A549 (cell line): ENCODE measurements at regions of chr11 and their contacts with region 1.

Region 1: DNA sequence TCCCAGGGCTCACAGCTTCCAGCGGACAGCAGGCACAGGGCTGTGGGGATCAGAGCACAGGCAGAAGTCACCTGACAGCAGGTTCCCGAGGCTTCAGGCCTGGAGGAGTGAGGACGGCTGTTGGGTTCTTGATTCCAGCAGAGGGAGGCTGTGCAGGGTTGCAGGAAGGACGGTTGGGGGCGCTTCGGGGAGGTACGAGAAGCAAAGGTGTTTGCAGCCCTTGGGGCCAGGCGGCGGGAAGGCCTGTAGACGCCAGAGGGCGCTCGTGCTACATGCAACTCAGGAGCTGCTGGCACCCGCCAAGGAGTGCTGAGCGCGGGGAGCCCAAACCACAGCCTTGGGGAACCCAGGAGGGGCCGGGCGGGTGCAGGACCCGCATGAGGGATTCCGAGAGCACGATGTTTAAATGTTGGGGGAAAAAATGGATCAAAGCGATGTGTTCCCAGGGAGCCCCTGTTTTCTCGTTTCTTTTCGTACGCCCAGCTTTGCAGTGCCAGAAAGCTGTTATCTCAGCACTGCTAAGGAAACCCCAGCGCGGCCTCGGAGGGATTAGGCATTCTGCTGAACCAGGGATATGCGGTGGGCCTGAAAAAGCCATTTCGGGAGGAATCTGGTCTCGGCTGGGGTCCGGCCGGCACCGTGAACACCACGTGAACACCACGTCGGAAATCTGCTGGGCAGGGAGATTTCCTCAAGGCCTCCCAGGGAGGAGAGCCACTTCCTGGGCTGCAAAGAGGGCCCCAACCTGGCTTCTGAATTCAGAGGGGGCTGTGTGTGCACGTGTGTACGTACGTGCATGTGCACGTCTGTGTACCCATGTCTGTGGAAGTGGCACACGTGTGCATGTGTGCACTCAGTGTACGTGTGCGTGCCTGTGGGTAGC is 88.1 kb downstream of the KCNQ1 start:
- DNase-seq: peak; percentile 83 to 95
- ATAC-seq: peak; percentile 77 to 92
- H3K4me3 ChIP-seq: no peak overlapping the region
- H3K27ac ChIP-seq: no peak overlapping the region
- H3K4me1 ChIP-seq: no peaks in the 10 kb centered on the region
- CTCF ChIP-seq: peak; percentile 99
- EP300 ChIP-seq: no peak
- POLR2A ChIP-seq: no peak
- RAD21 ChIP-seq: peak; percentile 99 to 100

Region 2: DNA sequence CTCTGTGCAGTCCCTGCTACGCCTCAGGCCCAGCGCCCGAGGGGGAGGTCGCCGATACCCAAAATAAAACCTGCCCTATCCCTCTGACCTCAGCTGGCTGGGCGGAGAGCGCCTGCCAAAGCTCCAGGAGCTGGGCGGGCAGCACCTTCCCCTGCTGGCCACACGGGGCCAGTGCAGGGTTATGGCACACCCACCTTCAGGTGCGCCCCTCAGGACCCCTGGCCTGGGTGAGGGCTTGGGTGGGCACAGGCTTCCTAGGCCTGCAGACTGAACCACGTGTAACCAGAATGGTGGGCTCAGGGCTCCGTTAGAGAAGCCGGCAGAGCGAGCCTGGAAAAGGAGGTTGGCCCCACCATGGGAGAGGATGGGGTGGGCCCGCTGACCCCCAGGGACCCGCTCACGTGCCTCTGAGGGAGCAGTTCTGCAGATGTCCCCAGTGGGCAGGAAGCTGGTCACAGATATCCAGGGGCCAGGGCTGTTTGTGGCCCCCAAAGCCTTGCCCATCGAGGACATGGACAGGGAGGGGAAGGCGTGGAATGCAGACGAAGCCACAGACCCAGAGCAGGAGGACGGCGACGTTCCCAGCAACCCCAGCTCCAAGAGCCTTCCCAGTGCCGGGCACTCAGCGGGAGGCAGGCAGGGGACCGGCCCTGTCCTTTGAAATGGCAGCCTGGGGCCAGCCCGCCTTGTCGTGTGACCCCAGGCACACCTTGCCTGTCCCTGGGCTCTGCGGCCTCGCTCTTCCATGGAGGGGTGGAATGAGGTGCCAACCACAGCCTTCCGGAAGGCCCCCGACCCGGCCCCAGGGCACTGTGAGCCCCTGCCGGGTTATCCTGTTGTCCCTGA is 615.1 kb before region 1 on chr11:
- CTCF ChIA-PET with region 1: no interaction called
- POLR2A ChIA-PET with region 1: no interaction called
- DNase-seq: no peak
- ATAC-seq: peak; percentile 52 to 76; a peak in 5 of 6 replicates
- H3K4me3 ChIP-seq: no peak overlapping the region
- H3K27ac ChIP-seq: no peak overlapping the region
- H3K4me1 ChIP-seq: no peaks in the 10 kb centered on the region
- CTCF ChIP-seq: no peak
- EP300 ChIP-seq: no peak
- POLR2A ChIP-seq: no peak
- RAD21 ChIP-seq: no peak

Region 3: DNA sequence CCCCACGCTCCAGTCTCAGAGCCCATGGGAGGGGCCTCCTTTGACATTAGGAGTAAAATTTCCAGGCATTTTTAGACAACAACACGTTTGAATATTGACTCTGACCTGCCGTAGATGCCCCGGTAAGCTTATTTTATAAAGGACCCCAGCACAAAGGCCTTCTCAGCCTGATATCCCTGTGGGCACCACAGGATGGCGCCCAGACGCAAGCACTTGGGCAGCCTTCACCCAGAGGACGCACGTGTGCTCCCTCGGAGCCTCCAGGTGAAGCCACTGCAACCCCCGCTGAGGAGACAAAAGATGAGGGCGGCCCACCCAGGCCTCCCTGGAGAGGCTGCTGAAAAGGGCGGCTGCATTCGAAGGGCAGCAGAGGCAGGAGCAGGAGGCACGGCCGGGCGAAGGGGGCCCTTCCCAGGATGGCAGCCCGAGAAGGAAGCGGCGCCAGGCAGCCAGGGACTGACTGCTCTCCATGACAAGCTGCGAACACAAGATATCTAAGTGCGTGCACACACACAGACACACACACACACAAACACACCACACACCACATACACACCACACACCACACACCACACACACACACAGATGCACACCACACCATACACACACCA is 346.2 kb before region 1 on chr11:
- CTCF ChIA-PET with region 1: interaction called, 31 read pairs
- POLR2A ChIA-PET with region 1: no interaction called
- DNase-seq: peak; percentile 76
- ATAC-seq: peak; percentile 72 to 92
- H3K4me3 ChIP-seq: no peak overlapping the region
- H3K27ac ChIP-seq: peak overlapping the region in 1 of 2 experiments; percentile 69; a peak in 2 of 6 replicates
- H3K4me1 ChIP-seq: no peaks in the 10 kb centered on the region
- CTCF ChIP-seq: peak; percentile 56
- EP300 ChIP-seq: no peak
- POLR2A ChIP-seq: no peak
- RAD21 ChIP-seq: peak; percentile 58 to 63; a peak in 4 of 5 replicates

Region 4: DNA sequence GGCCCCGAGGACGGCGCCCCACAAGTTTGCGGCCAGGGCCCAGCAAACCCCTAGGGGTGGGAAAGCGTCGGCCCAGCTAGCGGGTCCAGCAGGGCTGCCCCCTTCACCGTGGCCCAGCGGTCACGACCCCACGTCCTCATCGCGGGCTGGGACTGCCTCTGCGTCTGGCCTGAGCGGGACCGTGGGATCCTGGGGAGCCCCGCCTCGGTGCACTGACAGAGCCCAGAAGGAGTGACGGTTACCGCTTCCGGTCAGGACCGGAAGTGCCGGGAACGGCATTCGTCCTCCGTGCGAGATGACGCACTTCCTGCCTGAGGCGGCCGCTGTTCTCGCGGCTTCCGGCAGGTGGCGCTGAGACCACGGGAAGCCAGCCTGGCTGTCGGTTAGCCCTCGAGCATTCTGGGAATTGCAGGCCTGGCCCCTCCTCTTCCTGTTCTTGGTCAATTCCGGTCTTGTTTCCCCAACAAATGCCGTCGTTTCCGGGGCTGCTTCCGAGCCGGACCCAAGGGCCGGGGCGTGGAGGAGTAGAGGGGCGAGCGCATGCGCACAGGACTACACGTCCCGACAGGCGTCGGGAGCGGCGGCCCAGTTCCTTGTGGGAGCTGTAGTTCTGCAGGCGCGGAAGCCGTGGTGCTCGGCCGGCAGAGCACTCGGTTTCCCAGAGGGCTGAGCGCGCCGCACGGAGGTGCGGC is 132.7 kb before region 1 on chr11 and contains the start of gene TSSC4:
- CTCF ChIA-PET with region 1: interaction called, 18 read pairs
- POLR2A ChIA-PET with region 1: no interaction called
- DNase-seq: peak; percentile 99 to 100
- ATAC-seq: peak; percentile 86 to 93
- H3K4me3 ChIP-seq: peak within 1 kb of the TSS; percentile 100
- H3K27ac ChIP-seq: peak within 1 kb of the TSS; percentile 97 to 98
- H3K4me1 ChIP-seq: peaks cover 16% of the 10 kb centered on the region
- CTCF ChIP-seq: peak; percentile 91
- EP300 ChIP-seq: no peak
- POLR2A ChIP-seq: peak; percentile 89
- RAD21 ChIP-seq: peak; percentile 60 to 66
- polyA plus RNA-seq, gene TSSC4: 21.8 and 22.2 TPM in 2 replicates

Region 5: GRCh38 chr11:2466869-2467698 is 65.9 kb before region 1 on chr11:
- CTCF ChIA-PET with region 1: interaction called, 31 read pairs
- POLR2A ChIA-PET with region 1: no interaction called
- DNase-seq: no peak
- ATAC-seq: no peak
- H3K4me3 ChIP-seq: no peak overlapping the region
- H3K27ac ChIP-seq: no peak overlapping the region
- H3K4me1 ChIP-seq: no peaks in the 10 kb centered on the region
- CTCF ChIP-seq: no peak
- EP300 ChIP-seq: no peak
- POLR2A ChIP-seq: no peak
- RAD21 ChIP-seq: no peak

Region 6: GRCh38 chr11:2555336-2556290 is 22.7 kb after region 1 on chr11:
- CTCF ChIA-PET with region 1: interaction called, 22 read pairs
- POLR2A ChIA-PET with region 1: no interaction called
- DNase-seq: no peak
- ATAC-seq: no peak
- H3K4me3 ChIP-seq: no peak overlapping the region
- H3K27ac ChIP-seq: no peak overlapping the region
- H3K4me1 ChIP-seq: no peaks in the 10 kb centered on the region
- CTCF ChIP-seq: no peak
- EP300 ChIP-seq: no peak
- POLR2A ChIP-seq: no peak
- RAD21 ChIP-seq: no peak

Region 7: GRCh38 chr11:2590965-2591754 is 58.2 kb after region 1 on chr11:
- CTCF ChIA-PET with region 1: no interaction called
- POLR2A ChIA-PET with region 1: no interaction called
- DNase-seq: no peak
- ATAC-seq: no peak
- H3K4me3 ChIP-seq: no peak overlapping the region
- H3K27ac ChIP-seq: no peak overlapping the region
- H3K4me1 ChIP-seq: no peaks in the 10 kb centered on the region
- CTCF ChIP-seq: no peak
- EP300 ChIP-seq: no peak
- POLR2A ChIP-seq: no peak
- RAD21 ChIP-seq: no peak

Region 8: DNA sequence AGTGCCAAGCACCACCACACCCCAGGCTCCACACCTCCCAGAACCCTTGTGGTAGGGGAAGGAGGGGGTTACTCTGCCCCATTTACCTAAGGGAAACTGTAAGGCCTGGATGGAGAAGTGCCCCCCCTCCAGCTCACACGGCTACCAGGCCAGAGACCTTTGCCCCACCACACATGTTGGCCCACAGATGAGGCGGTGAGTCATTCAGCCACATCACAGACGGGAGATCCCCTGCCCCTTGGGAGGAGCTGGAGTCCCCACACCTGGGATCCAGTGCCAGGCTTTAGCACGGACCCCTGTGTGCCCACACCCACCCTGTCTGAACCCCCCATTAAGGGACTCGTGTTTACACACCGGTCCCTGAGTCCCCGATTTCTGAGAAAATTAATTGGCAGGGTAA is 327.7 kb after region 1 on chr11:
- CTCF ChIA-PET with region 1: interaction called, 20 read pairs
- POLR2A ChIA-PET with region 1: interaction called, 6 read pairs
- DNase-seq: peak; percentile 51 to 52
- ATAC-seq: peak; percentile 21 to 63; a peak in 4 of 6 replicates
- H3K4me3 ChIP-seq: no peak overlapping the region
- H3K27ac ChIP-seq: peak overlapping the region in 1 of 2 experiments; percentile 12; a peak in 1 of 6 replicates
- H3K4me1 ChIP-seq: peaks cover 9% of the 10 kb centered on the region
- CTCF ChIP-seq: no peak
- EP300 ChIP-seq: no peak
- POLR2A ChIP-seq: no peak
- RAD21 ChIP-seq: no peak

Region 9: DNA sequence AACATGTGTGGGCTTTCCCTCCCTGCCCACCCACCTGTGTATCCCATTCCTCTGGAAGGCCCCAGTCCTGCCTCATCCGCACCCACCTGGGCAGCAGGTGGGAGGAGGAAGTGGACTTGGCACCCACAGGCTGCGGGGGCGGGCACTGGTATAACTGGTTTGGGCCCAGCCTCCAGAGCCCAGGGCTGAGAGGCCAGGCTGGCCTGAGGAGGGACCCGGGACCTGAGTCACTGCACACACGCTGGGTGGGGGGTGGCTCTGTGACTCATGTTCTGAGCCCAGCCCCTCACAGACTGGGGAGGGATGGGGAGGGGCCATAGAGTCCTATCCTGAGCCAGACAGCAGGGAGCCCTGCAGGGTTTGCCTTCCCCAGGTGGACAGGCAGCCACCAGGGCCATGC is 379.6 kb after region 1 on chr11:
- CTCF ChIA-PET with region 1: interaction called, 52 read pairs
- POLR2A ChIA-PET with region 1: no interaction called
- DNase-seq: peak; percentile 76 to 87
- ATAC-seq: peak; percentile 72 to 87
- H3K4me3 ChIP-seq: 0 out of 3 replicates have a peak overlapping the region, but pooled peaks have one; percentile 25
- H3K27ac ChIP-seq: peak overlapping the region; percentile 84 to 90
- H3K4me1 ChIP-seq: peaks cover 31% of the 10 kb centered on the region
- CTCF ChIP-seq: no peak
- EP300 ChIP-seq: no peak
- POLR2A ChIP-seq: no peak
- RAD21 ChIP-seq: no peak